BJ (cell line): ENCODE measurements at regions of chr3 and their contacts with region 1.

Region 1: GRCh38 chr3:113890256-113890900 is 51.8 kb downstream of the GRAMD1C start:
- DNase-seq: no peak
- H3K4me3 ChIP-seq: no peak overlapping the region
- H3K27me3 ChIP-seq: no peaks in the 10 kb centered on the region
- CTCF ChIP-seq: no peak

Region 2: GRCh38 chr3:113878403-113878802 is 12.0 kb before region 1 on chr3:
- CTCF ChIA-PET with region 1: no interaction called
- POLR2A ChIA-PET with region 1: no interaction called
- DNase-seq: no peak
- H3K4me3 ChIP-seq: no peak overlapping the region
- H3K27me3 ChIP-seq: no peaks in the 10 kb centered on the region
- CTCF ChIP-seq: no peak

Region 3: DNA sequence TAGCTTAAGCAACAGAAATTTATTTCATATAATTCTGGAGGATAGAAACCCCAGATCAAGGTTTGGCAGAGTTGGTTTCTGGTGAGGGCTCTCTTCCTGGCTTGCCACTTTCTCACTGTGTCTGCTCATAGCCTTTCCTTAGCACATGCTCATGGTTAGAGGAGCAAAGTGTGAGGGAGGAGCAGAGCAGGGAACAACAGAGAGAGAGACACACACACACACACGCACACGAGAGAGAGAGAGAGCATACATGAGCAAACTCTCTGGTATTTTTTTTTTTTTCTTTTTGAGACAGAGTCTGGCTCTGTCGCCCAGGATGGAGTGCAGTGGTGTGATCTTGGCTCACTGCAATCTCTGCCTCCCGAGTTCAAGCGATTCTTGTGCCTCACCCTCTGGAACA is 20.6 kb after region 1 on chr3:
- CTCF ChIA-PET with region 1: no interaction called
- POLR2A ChIA-PET with region 1: no interaction called
- DNase-seq: no peak
- H3K4me3 ChIP-seq: no peak overlapping the region
- H3K27me3 ChIP-seq: no peaks in the 10 kb centered on the region
- CTCF ChIP-seq: no peak

Region 4: GRCh38 chr3:113947372-113948014 is 57.1 kb after region 1 on chr3 and contains the start of gene ZDHHC23:
- CTCF ChIA-PET with region 1: interaction called, 3 read pairs
- POLR2A ChIA-PET with region 1: interaction called, 10 read pairs
- DNase-seq: no peak
- H3K4me3 ChIP-seq: peak within 1 kb of the TSS; percentile 56
- H3K27me3 ChIP-seq: no peaks in the 10 kb centered on the region
- CTCF ChIP-seq: no peak
- polyA plus RNA-seq, gene ZDHHC23: 2.1 and 2.5 TPM in 2 replicates